Activated naive CD4-positive, alpha-beta T cell treated with anti-CD3 and anti-CD28 coated beads for 36 hours (primary cell): ENCODE measurements at regions of chr6 and their contacts with region 1.

Region 1: GRCh38 chr6:166989427-166990032 is 9.7 kb upstream of the CEP43 start:
- DNase-seq: peak; percentile 61
- H3K4me3 Mint-ChIP-seq: no peak overlapping the region
- H3K27ac Mint-ChIP-seq: no peak overlapping the region
- H3K4me1 Mint-ChIP-seq: peaks cover 19% of the 10 kb centered on the region
- H3K27me3 Mint-ChIP-seq: no peaks in the 10 kb centered on the region

Region 2: DNA sequence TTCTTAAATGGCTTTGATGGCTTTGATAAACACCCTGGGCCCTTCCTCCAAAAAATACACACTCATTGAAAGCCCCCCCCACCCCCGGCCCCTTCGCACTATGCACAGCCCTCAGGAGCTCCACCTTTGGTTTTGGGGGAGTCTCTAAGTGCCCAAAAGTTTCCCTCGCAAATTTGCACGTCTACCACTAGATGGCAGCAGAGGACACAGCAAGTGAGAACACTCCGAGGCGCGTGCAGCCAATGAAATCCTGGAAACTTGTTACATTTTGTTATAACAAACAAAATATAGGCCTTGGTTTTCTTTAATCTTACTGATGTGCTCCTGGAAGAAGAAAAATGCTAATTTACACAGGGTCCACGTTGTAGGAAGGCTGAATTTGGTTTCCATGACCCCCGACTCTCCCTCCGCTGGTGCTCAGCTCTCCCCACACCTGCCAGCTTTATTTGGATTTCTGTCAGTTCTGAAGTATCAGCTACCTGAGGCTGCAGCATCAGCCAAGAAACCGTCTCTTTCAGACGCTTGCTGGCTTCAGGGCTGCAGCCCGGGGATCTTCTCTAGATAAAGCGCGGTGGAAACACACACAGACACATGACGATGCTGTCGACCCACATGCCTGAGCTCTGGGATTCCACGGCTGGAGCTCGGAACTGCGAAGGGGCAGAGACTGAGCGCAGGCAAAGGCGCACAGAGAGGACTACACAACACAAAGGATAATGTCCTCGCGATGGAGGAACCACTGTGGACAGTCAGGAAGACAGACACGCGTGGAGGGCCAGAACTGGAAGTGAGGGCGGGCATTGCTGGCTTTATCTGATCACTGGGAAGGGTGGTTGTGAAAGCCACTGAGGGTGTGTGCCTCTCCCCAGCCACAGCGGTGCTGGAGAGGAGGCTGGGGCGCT is 214.1 kb before region 1 on chr6:
- CTCF ChIA-PET with region 1: interaction called, 26 read pairs
- intact Hi-C with region 1: loop called (anchors 1 kb)
- DNase-seq: peak; percentile 77
- H3K4me3 Mint-ChIP-seq: no peak overlapping the region
- H3K27ac Mint-ChIP-seq: no peak overlapping the region
- H3K4me1 Mint-ChIP-seq: peaks cover 6% of the 10 kb centered on the region
- H3K27me3 Mint-ChIP-seq: peaks cover 5% of the 10 kb centered on the region

Region 3: GRCh38 chr6:166786704-166787293 is 202.7 kb before region 1 on chr6:
- CTCF ChIA-PET with region 1: interaction called, 17 read pairs
- intact Hi-C with region 1: loop called (anchors 1 kb)
- DNase-seq: peak; percentile 24
- H3K4me3 Mint-ChIP-seq: no peak overlapping the region
- H3K27ac Mint-ChIP-seq: no peak overlapping the region
- H3K4me1 Mint-ChIP-seq: no peaks in the 10 kb centered on the region
- H3K27me3 Mint-ChIP-seq: no peaks in the 10 kb centered on the region

Region 4: GRCh38 chr6:166862287-166862977 is 127.1 kb before region 1 on chr6:
- CTCF ChIA-PET with region 1: interaction called, 4 read pairs
- intact Hi-C with region 1: loop called (anchors 5 kb)
- DNase-seq: peak; percentile 51
- H3K4me3 Mint-ChIP-seq: peak overlapping the region; percentile 79
- H3K27ac Mint-ChIP-seq: no peak overlapping the region
- H3K4me1 Mint-ChIP-seq: peaks cover 7% of the 10 kb centered on the region
- H3K27me3 Mint-ChIP-seq: no peaks in the 10 kb centered on the region

Region 5: GRCh38 chr6:166940643-166941068 is 48.9 kb before region 1 on chr6:
- CTCF ChIA-PET with region 1: interaction called, 10 read pairs
- intact Hi-C with region 1: no loop called
- DNase-seq: no peak
- H3K4me3 Mint-ChIP-seq: no peak overlapping the region
- H3K27ac Mint-ChIP-seq: peak overlapping the region; percentile 97
- H3K4me1 Mint-ChIP-seq: peaks cover 61% of the 10 kb centered on the region
- H3K27me3 Mint-ChIP-seq: no peaks in the 10 kb centered on the region

Region 6: DNA sequence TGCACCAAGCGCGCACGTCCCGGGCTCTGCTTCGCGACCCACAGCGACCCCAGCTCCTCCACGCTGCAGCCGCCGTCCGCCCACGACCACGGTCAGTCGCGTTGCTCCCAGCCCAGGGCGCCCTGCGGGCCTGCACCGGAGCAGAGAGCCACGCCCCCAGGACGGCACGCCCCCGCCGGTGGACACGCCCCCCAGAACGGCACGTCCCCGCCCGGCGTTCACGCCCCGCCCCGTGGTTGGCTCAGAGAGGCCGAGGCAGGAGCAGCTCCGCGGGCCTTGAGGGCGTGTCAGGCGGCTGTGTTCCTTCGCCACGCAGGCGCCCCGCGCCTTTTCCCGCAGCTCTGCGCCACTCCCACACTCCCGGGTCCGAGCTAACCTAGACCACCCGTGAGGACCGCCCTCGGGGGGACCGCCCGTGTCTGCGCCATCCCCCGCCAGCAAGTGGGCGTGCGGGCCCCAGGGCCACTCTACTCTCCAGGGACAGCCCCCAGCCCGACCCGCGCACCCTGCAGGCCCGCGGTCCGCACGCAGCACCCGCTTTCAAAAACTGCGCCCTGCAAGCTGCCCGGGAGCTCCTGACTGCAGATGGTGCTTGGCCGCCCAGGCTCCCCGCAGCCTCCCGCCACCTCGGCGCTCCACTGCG is 33.0 kb before region 1 on chr6 and contains the start of gene RNASET2:
- CTCF ChIA-PET with region 1: interaction called, 22 read pairs
- intact Hi-C with region 1: loop called (anchors 1 kb)
- DNase-seq: peak; percentile 99
- H3K4me3 Mint-ChIP-seq: peak within 1 kb of the TSS; percentile 86
- H3K27ac Mint-ChIP-seq: peak within 1 kb of the TSS; percentile 95
- H3K4me1 Mint-ChIP-seq: peaks cover 71% of the 10 kb centered on the region
- H3K27me3 Mint-ChIP-seq: no peaks in the 10 kb centered on the region
- total RNA-seq, gene RNASET2: 74.1 to 75.6 TPM

Region 7: DNA sequence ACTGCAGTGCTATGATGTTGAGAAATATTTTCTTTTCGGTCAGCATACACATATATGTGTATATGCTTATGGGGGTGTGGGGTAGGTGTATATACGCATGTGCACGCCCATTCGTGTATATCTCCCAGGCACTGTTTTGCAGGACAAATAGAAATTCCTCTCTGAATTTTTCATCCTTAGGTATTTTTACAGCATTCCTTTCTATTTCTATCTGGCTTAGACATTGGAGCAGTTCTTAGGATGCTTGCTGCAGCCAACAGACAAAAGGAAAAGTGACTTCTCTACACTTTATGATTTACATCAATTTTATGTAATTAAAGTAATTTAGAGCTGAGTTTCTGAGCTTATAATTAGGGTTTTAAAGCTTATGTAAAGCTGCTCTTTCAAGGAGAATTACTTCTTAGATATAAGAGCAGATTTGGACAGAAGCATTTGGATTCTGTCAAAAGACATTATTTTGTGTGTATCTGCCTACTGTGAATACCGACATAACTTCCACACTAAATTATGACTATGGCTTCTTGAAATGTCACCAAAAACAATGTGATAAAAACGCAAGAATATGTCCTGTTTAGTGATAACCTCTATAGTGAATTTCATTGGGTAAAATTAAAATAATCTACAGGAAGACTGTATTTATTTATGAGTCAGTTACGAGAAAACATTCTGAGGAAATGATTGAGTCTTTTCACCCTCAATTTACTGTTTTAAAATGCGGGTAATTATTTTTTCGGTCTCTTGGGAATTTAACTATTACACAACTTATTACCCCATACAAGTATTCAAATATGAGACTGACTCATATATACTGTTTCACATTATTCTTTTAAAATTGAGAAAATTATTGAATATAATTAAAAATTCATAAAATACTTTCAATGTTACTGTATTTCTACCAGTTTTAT is 11.7 kb before region 1 on chr6:
- CTCF ChIA-PET with region 1: interaction called, 18 read pairs
- intact Hi-C with region 1: no loop called
- DNase-seq: no peak
- H3K4me3 Mint-ChIP-seq: no peak overlapping the region
- H3K27ac Mint-ChIP-seq: no peak overlapping the region
- H3K4me1 Mint-ChIP-seq: peaks cover 11% of the 10 kb centered on the region
- H3K27me3 Mint-ChIP-seq: no peaks in the 10 kb centered on the region